ENCODE measurements at regions of chr20 and their contacts with region 1.

Region 1: GRCh38 chr20:4916971-4917881 is 84.1 kb downstream of the SLC23A2 start:
- DNase-seq: no peak
- H3K4me3 ChIP-seq: no peak overlapping the region
- H3K27ac ChIP-seq: no peak overlapping the region
- H3K4me1 ChIP-seq: peaks cover 31% of the 10 kb centered on the region
- CTCF ChIP-seq: 0 out of 2 replicates have a peak, but pooled peaks have one; percentile 15

Region 2: GRCh38 chr20:4844751-4845465 is 72.3 kb before region 1 on chr20:
- CTCF ChIA-PET with region 1: no interaction called
- POLR2A ChIA-PET with region 1: no interaction called
- intact Hi-C with region 1: loop called (anchors 5 kb)
- DNase-seq: no peak
- H3K4me3 ChIP-seq: no peak overlapping the region
- H3K27ac ChIP-seq: no peak overlapping the region
- H3K4me1 ChIP-seq: peaks cover 9% of the 10 kb centered on the region
- CTCF ChIP-seq: no peak

Region 3: DNA sequence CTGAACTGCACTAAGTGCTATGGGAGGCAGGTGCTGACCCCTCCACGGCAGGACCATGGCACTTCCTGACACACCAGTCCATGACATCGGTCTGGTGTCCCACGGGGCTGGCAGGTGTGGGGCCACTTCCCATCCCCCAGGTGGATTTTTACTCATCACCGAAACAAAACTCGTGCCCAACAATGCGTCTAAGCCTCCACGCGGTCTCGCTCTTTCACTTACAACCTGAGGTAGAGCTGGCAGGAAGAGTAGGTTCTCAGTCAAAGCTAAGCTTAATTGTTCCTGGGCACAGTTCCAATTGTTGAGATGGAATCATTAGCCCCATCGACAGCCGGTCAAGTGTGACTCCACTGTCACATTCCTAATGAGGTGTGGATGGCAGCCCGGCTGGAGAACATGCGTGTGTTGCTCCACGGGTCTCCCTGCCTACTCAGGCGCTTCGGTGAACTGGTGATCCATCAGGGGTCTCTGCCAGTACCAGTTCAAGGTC is 41.6 kb before region 1 on chr20:
- CTCF ChIA-PET with region 1: no interaction called
- POLR2A ChIA-PET with region 1: no interaction called
- intact Hi-C with region 1: loop called (anchors 1 kb)
- DNase-seq: peak; percentile 14
- H3K4me3 ChIP-seq: no peak overlapping the region
- H3K27ac ChIP-seq: peak overlapping the region; percentile 24
- H3K4me1 ChIP-seq: peaks cover 16% of the 10 kb centered on the region
- CTCF ChIP-seq: no peak

Region 4: GRCh38 chr20:4956200-4956810 is 39.1 kb after region 1 on chr20:
- CTCF ChIA-PET with region 1: no interaction called
- POLR2A ChIA-PET with region 1: no interaction called
- intact Hi-C with region 1: no loop called
- DNase-seq: peak; percentile 77
- H3K4me3 ChIP-seq: no peak overlapping the region
- H3K27ac ChIP-seq: no peak overlapping the region
- H3K4me1 ChIP-seq: peaks cover 4% of the 10 kb centered on the region
- CTCF ChIP-seq: peak; percentile 99

Region 5: DNA sequence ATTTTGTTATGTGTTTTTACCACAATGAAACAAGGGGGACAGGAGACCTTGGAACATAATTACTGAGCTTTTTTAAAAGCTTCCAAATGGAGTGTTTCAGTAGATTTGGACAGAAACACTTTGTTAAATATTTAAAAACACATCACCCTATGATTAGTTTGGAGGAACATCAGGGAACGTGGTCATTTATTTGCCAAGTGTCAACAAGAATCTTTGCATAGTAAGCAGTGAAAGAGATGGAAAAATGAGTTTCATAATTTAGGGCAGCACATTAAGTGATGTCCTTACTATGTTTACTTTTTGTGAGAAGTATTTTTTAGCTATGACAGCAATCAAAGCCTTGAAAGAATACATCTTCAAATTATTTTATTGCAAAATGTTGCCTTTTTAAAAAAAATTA is 316.9 kb after region 1 on chr20:
- CTCF ChIA-PET with region 1: no interaction called
- POLR2A ChIA-PET with region 1: no interaction called
- intact Hi-C with region 1: no loop called
- DNase-seq: no peak
- H3K4me3 ChIP-seq: no peak overlapping the region
- H3K27ac ChIP-seq: no peak overlapping the region
- H3K4me1 ChIP-seq: no peaks in the 10 kb centered on the region
- CTCF ChIP-seq: no peak